ENCODE measurements at regions of chr7 and their contacts with region 1.

Region 1: DNA sequence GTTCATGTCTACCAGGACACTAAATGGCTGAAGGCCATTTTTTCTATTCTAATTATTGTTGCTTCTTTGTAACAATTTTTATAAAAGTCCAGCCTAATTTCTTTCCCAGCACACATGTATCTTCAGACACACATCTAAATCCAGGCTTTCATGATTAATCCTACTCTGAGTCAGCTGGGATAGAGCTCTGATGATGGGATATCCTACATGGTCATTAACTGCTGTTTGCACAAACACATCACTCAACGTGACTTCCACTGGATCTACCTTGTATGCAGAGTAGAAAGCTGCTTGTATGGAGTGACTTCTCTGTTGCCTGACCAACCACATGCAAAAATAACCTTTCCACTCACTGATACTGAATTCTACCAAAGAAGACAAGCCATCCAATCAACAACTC is 260.9 kb downstream of the AHR start:
- DNase-seq: no peak
- H3K4me3 Mint-ChIP-seq: peak overlapping the region; percentile 62
- H3K27ac Mint-ChIP-seq: peak overlapping the region; percentile 93
- H3K4me1 Mint-ChIP-seq: peaks cover 67% of the 10 kb centered on the region
- H3K27me3 Mint-ChIP-seq: no peaks in the 10 kb centered on the region
- CTCF ChIP-seq: no peak

Region 2: DNA sequence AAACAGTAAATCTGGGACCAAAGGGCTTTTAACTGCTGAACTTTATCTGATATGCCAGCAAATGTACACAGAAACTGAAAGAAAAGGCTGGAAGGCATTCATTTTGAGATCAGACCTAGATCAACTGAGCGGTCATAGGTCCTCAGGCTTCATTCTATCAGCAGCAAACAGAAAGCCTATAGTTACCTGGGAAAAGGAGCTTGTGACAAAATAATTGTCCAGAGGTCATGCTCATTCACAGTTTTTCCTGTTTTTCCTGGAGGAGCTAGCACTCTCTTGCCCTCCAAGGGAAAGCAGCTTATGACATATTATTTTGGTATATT is 59.2 kb after region 1 on chr7:
- CTCF ChIA-PET with region 1: interaction called, 3 read pairs
- intact Hi-C with region 1: loop called (anchors 5 kb)
- DNase-seq: no peak
- H3K4me3 Mint-ChIP-seq: peak overlapping the region; percentile 34
- H3K27ac Mint-ChIP-seq: peak overlapping the region; percentile 3
- H3K4me1 Mint-ChIP-seq: peaks cover 38% of the 10 kb centered on the region
- H3K27me3 Mint-ChIP-seq: no peaks in the 10 kb centered on the region
- CTCF ChIP-seq: no peak

Measured in Calu3 (cell line).